Gastrocnemius medialis (tissue), 4 donors: ENCODE measurements at regions of chr20 and their contacts with region 1.

Region 1: DNA sequence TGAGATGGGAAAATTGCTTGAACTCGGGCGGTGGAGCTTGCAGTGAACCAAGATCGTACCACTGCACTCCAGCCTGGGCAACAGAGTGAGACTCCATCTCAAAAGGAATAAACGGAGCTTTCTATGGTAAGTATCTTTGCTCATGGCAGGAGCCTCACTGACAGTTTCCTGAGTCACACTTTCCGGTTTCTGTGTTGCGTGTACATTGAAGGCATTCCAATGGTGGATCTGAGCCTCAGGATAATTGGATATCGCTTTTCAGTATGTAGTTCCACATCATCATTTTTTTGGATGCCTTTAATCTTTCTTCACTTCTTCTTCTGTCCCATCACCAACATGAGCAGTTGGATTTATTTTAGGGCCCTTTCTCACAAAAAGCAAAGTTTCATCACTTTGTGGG is 28.6 kb upstream of the GTSF1L start:
- DNase-seq: no peak
- ATAC-seq: no peak
- H3K4me3 ChIP-seq: no peak overlapping the region
- H3K27ac ChIP-seq: no peak overlapping the region
- H3K4me1 ChIP-seq: no peaks in the 10 kb centered on the region
- H3K27me3 ChIP-seq: peaks cover 0 to 2% (median 0%) of the 10 kb centered on the region in 3 donors
- CTCF ChIP-seq: no peak
- POLR2A ChIP-seq: no peak

Region 2: GRCh38 chr20:43583982-43584432 is 171.4 kb before region 1 on chr20:
- in situ Hi-C with region 1: no loop called
- intact Hi-C with region 1: no loop called
- DNase-seq: peak in 1 of 2 donors; percentile 36
- ATAC-seq: no peak
- H3K4me3 ChIP-seq: no peak overlapping the region
- H3K27ac ChIP-seq: no peak overlapping the region
- H3K4me1 ChIP-seq: no peaks in the 10 kb centered on the region
- H3K27me3 ChIP-seq: no peaks in the 10 kb centered on the region
- CTCF ChIP-seq: no peak
- POLR2A ChIP-seq: no peak

Region 3: DNA sequence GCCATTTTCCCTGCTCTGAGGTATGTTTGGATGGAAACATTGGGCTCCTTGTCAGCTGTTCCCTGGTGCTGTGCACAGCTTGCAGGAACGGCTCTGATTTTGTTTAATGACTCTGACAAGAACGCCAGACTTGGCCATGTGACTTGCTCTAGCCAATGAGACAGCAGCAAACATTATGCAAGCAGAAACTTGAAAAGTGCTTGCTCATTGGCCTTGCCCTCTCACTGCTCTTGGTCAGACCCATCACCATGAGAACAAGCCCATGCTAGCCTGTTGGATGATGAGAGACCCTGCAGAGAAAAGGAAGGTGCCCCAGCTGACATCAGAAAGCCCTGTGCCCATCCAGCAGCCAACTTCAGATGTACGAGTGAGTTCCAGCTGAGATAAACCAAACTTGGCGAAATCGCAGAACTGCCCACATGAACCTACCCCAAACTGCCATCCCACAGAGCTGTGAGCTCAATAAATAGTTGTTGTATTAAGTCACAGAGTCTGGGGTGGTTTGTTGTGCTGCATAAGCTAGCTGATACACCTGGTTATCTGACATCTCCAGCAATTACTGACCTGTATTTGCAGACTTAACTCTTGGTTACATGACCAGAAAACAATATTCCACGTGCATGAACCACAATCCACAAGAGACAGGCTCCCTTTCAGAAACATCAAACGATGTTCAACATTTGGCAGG is 334.7 kb after region 1 on chr20:
- in situ Hi-C with region 1: loop called in 1 of 4 experiments (anchors 5 kb)
- intact Hi-C with region 1: no loop called
- DNase-seq: peak in 1 of 2 donors; percentile 27
- ATAC-seq: peak in 1 of 2 donors; percentile 68
- H3K4me3 ChIP-seq: no peak overlapping the region
- H3K27ac ChIP-seq: no peak overlapping the region
- H3K4me1 ChIP-seq: no peaks in the 10 kb centered on the region
- H3K27me3 ChIP-seq: no peaks in the 10 kb centered on the region
- CTCF ChIP-seq: no peak
- POLR2A ChIP-seq: no peak

Region 4: GRCh38 chr20:44361021-44361420 is 605.6 kb after region 1 on chr20:
- in situ Hi-C with region 1: no loop called
- intact Hi-C with region 1: no loop called
- DNase-seq: no peak
- ATAC-seq: no peak
- H3K4me3 ChIP-seq: no peak overlapping the region
- H3K27ac ChIP-seq: no peak overlapping the region
- H3K4me1 ChIP-seq: no peaks in the 10 kb centered on the region
- H3K27me3 ChIP-seq: no peaks in the 10 kb centered on the region
- CTCF ChIP-seq: no peak
- POLR2A ChIP-seq: no peak